ENCODE measurements at regions of chr12 and their contacts with region 1.

Region 1: DNA sequence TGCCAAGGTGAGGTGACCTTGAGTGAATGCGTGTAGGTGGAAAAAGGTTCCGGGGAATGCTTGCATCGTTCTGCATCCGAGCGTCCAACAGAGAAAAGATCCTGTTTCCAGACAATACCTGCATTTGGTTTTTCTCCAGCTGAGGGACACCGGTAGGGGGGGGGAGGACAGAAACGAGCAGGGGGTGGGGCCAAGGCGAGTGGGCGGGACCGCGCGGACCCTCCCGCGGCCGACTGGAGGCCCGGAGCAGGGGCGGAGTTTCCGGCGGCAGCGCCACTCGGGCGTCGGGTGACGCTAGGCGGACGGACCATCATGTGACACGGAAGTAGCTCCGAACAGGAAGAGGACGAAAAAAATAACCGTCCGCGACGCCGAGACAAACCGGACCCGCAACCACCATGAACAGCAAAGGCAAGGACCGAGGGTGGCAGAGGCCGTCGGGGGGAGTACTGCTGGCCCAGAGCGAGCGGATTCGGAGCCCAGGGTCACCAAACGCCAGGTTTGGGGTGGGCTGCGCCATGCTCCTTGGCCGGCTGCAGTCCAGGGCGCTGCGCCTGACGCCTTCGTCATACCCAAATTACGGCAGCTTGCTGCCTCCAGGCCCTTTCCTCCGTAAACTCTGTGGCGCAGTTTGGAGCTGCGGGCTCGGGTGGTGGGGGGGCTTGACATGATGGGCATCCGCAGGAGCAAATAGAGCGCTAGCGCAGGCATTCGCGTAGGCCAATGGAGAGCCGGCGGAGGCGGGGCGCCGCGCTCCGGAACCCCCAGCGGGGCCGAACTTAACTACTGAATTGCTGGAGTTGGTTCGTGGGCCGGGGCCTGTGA is at the start of gene DAZAP2:
- DNase-seq: peak; percentile 98
- H3K4me3 ChIP-seq: peak within 1 kb of the TSS; percentile 75
- H3K4me3 Mint-ChIP-seq: peak within 1 kb of the TSS; percentile 86
- H3K27ac Mint-ChIP-seq: peak within 1 kb of the TSS; percentile 100
- H3K4me1 ChIP-seq: peaks cover 17% of the 10 kb centered on the region
- H3K4me1 Mint-ChIP-seq: peaks cover 5% of the 10 kb centered on the region
- H3K27me3 ChIP-seq: no peaks in the 10 kb centered on the region
- H3K27me3 Mint-ChIP-seq: no peaks in the 10 kb centered on the region
- CTCF ChIP-seq: peak; percentile 16 to 59
- total RNA-seq, gene DAZAP2: 84.9 and 100 TPM in 2 replicates

Region 2: DNA sequence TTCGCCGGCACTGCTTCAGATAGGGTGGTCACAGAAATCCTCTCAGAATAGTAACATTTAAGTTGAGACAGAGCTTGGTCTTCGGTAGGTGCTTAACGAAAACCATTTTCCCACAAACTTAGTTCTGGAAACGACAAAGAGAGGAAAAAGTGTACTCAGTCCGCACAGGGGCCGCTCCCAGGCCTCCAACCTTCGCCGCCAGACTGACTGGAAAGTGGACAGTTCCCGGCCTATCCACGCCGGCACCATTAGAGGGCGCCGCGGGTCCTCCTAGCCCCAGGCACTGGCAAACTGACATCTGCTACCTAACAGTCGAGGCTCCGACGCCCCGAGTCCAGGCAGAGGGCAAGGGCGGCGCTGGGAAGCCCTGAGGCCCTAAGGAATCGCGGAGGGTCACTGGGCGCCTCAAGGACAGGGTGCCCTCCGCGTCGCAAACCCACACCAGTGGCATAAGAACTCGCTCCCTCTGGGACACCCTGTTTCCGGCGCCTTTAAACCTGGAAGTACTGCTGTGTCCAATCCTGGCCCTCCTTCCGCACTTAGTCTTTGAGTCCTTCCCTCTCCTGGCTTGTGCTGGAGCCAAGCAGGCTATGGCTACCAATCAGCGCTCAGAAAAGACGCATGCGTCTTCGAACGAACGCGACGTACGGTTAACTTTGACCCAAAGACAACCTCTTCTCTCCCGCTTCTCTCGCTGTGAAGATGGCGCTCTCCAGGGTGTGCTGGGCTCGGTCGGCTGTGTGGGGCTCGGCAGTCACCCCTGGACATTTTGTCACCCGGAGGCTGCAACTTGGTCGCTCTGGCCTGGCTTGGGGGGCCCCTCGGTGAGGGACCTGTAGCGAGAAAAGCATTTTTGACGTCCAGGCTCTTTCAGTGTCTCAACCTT is 190.8 kb before region 1 on chr12 and contains the start of gene LETMD1:
- CTCF ChIA-PET with region 1: no interaction called
- POLR2A ChIA-PET with region 1: interaction called, 13 read pairs
- intact Hi-C with region 1: loop called (anchors 2 kb)
- DNase-seq: peak; percentile 96 to 98
- H3K4me3 ChIP-seq: peak within 1 kb of the TSS; percentile 64
- H3K4me3 Mint-ChIP-seq: peak within 1 kb of the TSS; percentile 99
- H3K27ac Mint-ChIP-seq: peak within 1 kb of the TSS; percentile 96
- H3K4me1 ChIP-seq: no peaks in the 10 kb centered on the region
- H3K4me1 Mint-ChIP-seq: no peaks in the 10 kb centered on the region
- H3K27me3 ChIP-seq: no peaks in the 10 kb centered on the region
- H3K27me3 Mint-ChIP-seq: no peaks in the 10 kb centered on the region
- CTCF ChIP-seq: peak; percentile 93 to 99
- total RNA-seq, gene LETMD1: 90.6 and 95.6 TPM in 2 replicates

Region 3: DNA sequence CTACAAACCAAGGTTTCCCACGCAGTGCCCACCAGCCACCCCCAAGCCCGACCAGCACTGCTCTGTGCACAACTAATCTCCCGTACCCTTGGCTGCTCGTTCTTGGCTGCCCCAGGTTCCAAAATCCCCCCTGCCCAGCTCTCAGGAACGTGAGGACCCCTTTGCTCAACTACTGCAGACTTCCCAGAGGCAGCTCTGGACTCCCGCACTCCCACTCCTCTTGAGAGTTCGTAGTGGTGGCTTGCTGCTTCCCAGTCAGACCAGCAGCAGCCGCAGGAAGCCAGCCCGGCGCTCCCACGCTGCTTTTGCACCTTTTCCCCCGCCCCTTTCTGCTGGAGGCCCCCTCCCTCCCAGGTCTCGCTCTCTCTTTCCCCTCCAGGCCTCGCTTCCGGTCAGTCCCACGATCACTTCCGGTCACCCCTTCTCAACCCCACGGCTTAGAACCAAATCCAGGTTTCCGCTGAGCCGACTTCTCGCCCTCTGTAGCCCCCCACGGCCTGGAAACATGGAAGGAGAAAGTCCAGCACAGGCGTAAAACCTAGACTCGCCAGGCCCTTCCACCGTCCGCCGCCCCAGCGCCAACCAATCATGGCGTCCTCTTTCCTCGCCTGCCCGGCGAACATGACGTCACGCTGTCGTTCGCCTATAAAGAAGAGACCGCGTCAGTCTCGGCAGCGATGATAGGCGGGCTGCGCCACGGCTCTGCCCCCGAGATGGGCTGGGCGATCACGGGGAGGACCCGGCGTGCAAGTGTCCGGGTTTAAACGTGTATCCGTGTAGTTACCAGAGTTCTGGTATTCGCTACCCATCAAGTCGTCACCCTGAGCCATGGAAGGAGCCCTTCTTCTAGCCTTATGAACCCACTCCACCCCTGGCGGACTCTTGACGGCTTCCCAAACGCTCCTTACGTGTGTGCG is 65.9 kb before region 1 on chr12 and contains the start of gene TFCP2:
- CTCF ChIA-PET with region 1: interaction called, 8 read pairs
- POLR2A ChIA-PET with region 1: interaction called, 4 read pairs
- intact Hi-C with region 1: loop called (anchors 2 kb)
- DNase-seq: peak; percentile 98 to 99
- H3K4me3 ChIP-seq: peak within 1 kb of the TSS; percentile 58
- H3K4me3 Mint-ChIP-seq: no peak within 1 kb of the TSS
- H3K27ac Mint-ChIP-seq: no peak within 1 kb of the TSS
- H3K4me1 ChIP-seq: peaks cover 6% of the 10 kb centered on the region; the same call in 1 of the 2 replicates
- H3K4me1 Mint-ChIP-seq: no peaks in the 10 kb centered on the region
- H3K27me3 ChIP-seq: no peaks in the 10 kb centered on the region
- H3K27me3 Mint-ChIP-seq: no peaks in the 10 kb centered on the region
- CTCF ChIP-seq: peak in 1 of 2 experiments; percentile 25
- total RNA-seq, gene TFCP2: 51.4 and 52.6 TPM in 2 replicates

Region 4: DNA sequence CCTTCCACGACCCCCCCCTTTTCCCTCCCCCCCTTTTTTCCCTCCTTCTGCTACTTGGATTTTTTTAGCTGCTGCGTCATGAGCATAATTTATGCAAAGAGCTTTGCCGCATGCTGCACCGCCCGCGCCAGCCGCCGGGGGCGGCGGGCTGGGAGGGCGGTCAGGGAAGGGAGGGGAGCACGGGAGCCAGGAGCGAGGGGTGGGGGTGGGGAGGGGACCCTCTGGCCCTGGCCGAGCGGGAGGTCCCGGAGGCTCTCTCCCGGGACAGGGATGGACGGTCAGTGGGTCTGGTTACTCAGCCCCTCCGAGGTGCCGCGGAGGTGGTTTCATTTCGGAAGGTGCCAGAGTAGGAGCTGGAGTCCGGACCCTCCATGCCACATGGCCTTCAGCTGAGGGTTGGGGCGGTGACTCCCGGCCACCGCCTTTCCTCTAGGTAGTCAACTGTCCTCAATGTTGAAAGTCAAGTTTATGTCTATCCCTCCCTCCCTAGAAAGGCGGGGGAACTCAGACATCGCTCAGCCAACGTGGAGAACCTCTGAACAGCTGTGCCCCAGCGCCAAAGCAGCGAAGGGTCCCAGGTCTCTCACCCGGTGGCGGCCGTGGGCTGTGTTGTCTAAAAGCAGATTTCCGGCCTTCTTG is 20.6 kb before region 1 on chr12 and contains the start of gene POU6F1:
- CTCF ChIA-PET with region 1: interaction called, 26 read pairs
- POLR2A ChIA-PET with region 1: interaction called, 39 read pairs
- intact Hi-C with region 1: loop called (anchors 1 kb)
- DNase-seq: peak; percentile 77 to 87
- H3K4me3 ChIP-seq: peak within 1 kb of the TSS; percentile 89
- H3K4me3 Mint-ChIP-seq: peak within 1 kb of the TSS; percentile 76
- H3K27ac Mint-ChIP-seq: peak within 1 kb of the TSS; percentile 94
- H3K4me1 ChIP-seq: peaks cover 6% of the 10 kb centered on the region; the same call in 1 of the 2 replicates
- H3K4me1 Mint-ChIP-seq: peaks cover 20% of the 10 kb centered on the region
- H3K27me3 ChIP-seq: no peaks in the 10 kb centered on the region
- H3K27me3 Mint-ChIP-seq: no peaks in the 10 kb centered on the region
- CTCF ChIP-seq: peak; percentile 75 to 84
- total RNA-seq, gene POU6F1: 4.1 and 5.3 TPM in 2 replicates

Measured in Caco-2 (cell line).